ENCODE measurements at regions of chr9 and their contacts with region 1.

Region 1: DNA sequence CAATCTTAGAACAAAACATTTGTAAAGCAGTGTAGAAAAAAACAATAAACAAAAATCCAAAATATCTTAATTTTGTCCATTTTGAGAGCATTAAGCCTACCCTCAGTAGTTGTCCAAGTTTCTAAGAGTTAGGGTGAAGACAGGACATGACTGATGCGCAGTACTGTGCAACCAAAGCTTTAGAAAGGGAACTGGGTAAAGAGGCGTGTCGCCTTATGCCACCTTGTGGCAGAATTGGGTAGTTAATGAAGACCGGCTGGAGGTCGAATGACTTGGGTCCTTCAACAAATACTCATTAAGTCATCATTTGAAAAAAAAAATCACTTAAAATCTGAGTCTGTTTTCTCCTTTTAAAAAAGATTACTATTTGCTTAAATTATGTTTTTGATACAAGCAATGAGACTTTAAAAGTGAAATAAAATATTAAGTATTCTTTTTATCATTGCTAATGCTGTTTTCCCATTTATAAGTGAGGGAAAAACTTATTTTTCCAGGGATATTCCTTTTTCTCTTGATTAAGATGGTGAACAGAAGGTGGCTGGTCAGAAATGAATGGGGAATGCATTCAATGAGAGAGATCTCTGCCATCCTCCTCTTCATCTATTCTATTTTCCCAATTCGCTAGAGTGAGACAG is 3.5 kb upstream of the RNF20 start:
- DNase-seq: peak; percentile 81
- H3K27ac ChIP-seq: no peak overlapping the region
- CTCF ChIP-seq: peak; percentile 98

Region 2: GRCh38 chr9:101449140-101449721 is 81.0 kb before region 1 on chr9:
- CTCF ChIA-PET with region 1: interaction called, 17 read pairs
- POLR2A ChIA-PET with region 1: no interaction called
- DNase-seq: peak; percentile 82
- H3K27ac ChIP-seq: no peak overlapping the region
- CTCF ChIP-seq: peak; percentile 99

Region 3: DNA sequence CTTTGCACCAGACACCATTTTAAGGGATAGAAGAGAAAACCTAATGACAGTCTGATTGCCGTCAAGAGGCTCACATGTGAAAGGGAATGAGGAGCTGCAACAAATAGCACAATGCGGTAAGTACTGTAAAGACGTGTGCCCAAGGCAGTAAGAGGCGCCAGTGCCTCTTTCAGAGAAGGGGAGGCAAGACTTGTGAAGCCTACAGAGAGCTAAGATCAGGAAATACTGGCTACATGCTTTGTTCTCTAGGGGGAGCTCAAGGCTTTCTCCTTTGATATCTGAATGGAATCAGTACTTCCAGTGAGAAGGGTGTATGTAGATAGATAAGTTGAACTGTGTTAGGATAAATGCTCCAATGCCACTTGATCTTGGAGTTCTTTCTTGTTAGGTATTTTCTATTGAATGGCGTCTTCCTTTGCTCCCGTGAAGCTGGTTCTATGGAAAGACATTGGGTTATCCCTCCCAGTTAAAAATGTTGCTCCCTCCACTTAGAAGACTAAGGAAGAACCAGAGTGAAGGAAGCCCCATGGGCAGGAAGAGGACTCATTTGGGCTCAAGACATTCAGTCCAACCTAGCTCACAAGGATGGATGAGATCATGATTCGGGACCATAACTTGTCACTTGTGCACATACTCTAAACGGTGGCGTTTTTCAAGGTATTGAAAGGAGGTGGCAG is 71.1 kb before region 1 on chr9:
- CTCF ChIA-PET with region 1: interaction called, 99 read pairs
- POLR2A ChIA-PET with region 1: interaction called, 3 read pairs
- DNase-seq: peak; percentile 85
- H3K27ac ChIP-seq: no peak overlapping the region
- CTCF ChIP-seq: peak; percentile 97

Region 4: GRCh38 chr9:101465392-101465791 is 64.8 kb before region 1 on chr9:
- CTCF ChIA-PET with region 1: interaction called, 99 read pairs
- POLR2A ChIA-PET with region 1: interaction called, 3 read pairs
- DNase-seq: peak; percentile 84
- H3K27ac ChIP-seq: no peak overlapping the region
- CTCF ChIP-seq: peak; percentile 86

Region 5: GRCh38 chr9:101664453-101664852 is 134.3 kb after region 1 on chr9:
- CTCF ChIA-PET with region 1: no interaction called
- POLR2A ChIA-PET with region 1: no interaction called
- DNase-seq: no peak
- H3K27ac ChIP-seq: no peak overlapping the region
- CTCF ChIP-seq: no peak

Measured in RWPE1 (cell line).